MCF 10A (cell line): ENCODE measurements at regions of chr11 and their contacts with region 1.

Region 1: GRCh38 chr11:4636962-4637661 is at the start of gene OR51D1:
- DNase-seq: peak; percentile 65
- H3K4me3 Mint-ChIP-seq: no peak within 1 kb of the TSS
- H3K27ac Mint-ChIP-seq: no peak within 1 kb of the TSS
- H3K4me1 Mint-ChIP-seq: no peaks in the 10 kb centered on the region
- H3K27me3 Mint-ChIP-seq: no peaks in the 10 kb centered on the region
- CTCF ChIP-seq: peak; percentile 81
- total RNA-seq, gene OR51D1: not detected in 2 replicates

Region 2: GRCh38 chr11:4607781-4608666 is 29.1 kb before region 1 on chr11 and contains the start of gene TRIM68:
- CTCF ChIA-PET with region 1: interaction called, 15 read pairs
- POLR2A ChIA-PET with region 1: no interaction called
- intact Hi-C with region 1: no loop called
- DNase-seq: peak; percentile 96
- H3K4me3 Mint-ChIP-seq: peak within 1 kb of the TSS; percentile 85
- H3K27ac Mint-ChIP-seq: peak within 1 kb of the TSS; percentile 91
- H3K4me1 Mint-ChIP-seq: peaks cover 25% of the 10 kb centered on the region
- H3K27me3 Mint-ChIP-seq: no peaks in the 10 kb centered on the region
- CTCF ChIP-seq: no peak
- total RNA-seq, gene TRIM68: 7.9 and 9.0 TPM in 2 replicates

Region 3: GRCh38 chr11:4647766-4648165 is 10.7 kb after region 1 on chr11:
- CTCF ChIA-PET with region 1: interaction called, 26 read pairs
- POLR2A ChIA-PET with region 1: no interaction called
- intact Hi-C with region 1: no loop called
- DNase-seq: no peak
- H3K4me3 Mint-ChIP-seq: no peak overlapping the region
- H3K27ac Mint-ChIP-seq: no peak overlapping the region
- H3K4me1 Mint-ChIP-seq: no peaks in the 10 kb centered on the region
- H3K27me3 Mint-ChIP-seq: peaks cover 24% of the 10 kb centered on the region
- CTCF ChIP-seq: no peak

Region 4: DNA sequence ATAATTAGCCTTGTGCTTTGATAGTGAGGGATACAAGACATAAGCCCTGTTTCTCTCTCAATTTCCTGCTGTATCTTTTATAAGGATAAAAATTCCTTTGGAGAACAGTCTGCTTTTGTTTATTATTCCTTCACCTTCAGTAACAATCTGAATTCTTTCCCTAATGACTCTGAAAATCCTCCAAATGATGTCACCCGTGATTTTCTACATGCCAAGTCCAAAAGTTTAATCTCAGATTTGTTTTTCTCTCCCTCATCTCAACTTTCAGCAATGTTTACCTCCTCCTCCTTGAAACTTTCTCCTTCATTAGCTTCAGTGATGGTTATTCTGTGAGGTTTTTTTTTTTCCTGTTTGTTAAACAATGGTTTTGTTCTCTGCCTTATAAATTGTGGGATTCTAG is 58.3 kb after region 1 on chr11:
- CTCF ChIA-PET with region 1: interaction called, 11 read pairs
- POLR2A ChIA-PET with region 1: no interaction called
- intact Hi-C with region 1: no loop called
- DNase-seq: no peak
- H3K4me3 Mint-ChIP-seq: no peak overlapping the region
- H3K27ac Mint-ChIP-seq: no peak overlapping the region
- H3K4me1 Mint-ChIP-seq: no peaks in the 10 kb centered on the region
- H3K27me3 Mint-ChIP-seq: peaks cover 25% of the 10 kb centered on the region
- CTCF ChIP-seq: no peak

Region 5: DNA sequence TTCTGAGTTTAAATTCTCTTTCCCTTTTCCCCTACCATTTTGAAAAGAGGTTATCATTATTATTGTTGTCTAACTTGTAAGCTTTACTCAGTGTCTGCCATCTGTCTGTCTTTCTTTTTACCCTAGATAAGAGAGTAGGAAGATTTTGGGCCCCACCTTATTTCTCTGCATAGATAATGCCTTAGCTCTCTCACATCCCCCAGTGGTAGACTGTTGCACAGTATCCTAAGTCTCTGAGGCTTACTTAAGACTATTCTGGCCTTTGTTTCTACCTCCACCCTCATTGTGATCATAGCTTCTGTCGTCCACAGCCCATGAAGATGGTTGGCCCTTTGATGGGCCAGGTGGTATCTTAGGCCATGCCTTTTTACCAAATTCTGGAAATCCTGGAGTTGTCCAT is 353.9 kb after region 1 on chr11:
- CTCF ChIA-PET with region 1: interaction called, 27 read pairs
- POLR2A ChIA-PET with region 1: no interaction called
- intact Hi-C with region 1: no loop called
- DNase-seq: peak; percentile 11
- H3K4me3 Mint-ChIP-seq: no peak overlapping the region
- H3K27ac Mint-ChIP-seq: no peak overlapping the region
- H3K4me1 Mint-ChIP-seq: no peaks in the 10 kb centered on the region
- H3K27me3 Mint-ChIP-seq: peaks cover 46% of the 10 kb centered on the region
- CTCF ChIP-seq: no peak